GM12878 (cell line): ENCODE measurements at regions of chr14 and their contacts with region 1.

Region 1: GRCh38 chr14:59215325-59216181 is 27.1 kb downstream of the DAAM1 start:
- DNase-seq: no peak
- ATAC-seq: peak; percentile 19
- H3K4me3 ChIP-seq: 0 out of 2 replicates have a peak overlapping the region, but pooled peaks have one; percentile 11
- H3K27ac ChIP-seq: peak overlapping the region; percentile 59
- H3K4me1 ChIP-seq: peaks cover 15% of the 10 kb centered on the region
- H3K27me3 ChIP-seq: no peaks in the 10 kb centered on the region
- CTCF ChIP-seq: no peak
- EP300 ChIP-seq: no peak
- POLR2A ChIP-seq: no peak
- RAD21 ChIP-seq: no peak

Region 2: GRCh38 chr14:59199614-59200013 is 15.9 kb before region 1 on chr14:
- CTCF ChIA-PET with region 1: interaction called, 4 read pairs
- POLR2A ChIA-PET with region 1: interaction called, 5 read pairs
- RAD21 ChIA-PET with region 1: interaction called, 9 read pairs
- SMC1A ChIA-PET with region 1: interaction called, 17 read pairs
- in situ Hi-C with region 1: no loop called
- intact Hi-C with region 1: no loop called
- DNase-seq: no peak
- ATAC-seq: peak; percentile 27
- H3K4me3 ChIP-seq: no peak overlapping the region
- H3K27ac ChIP-seq: no peak overlapping the region
- H3K4me1 ChIP-seq: no peaks in the 10 kb centered on the region
- H3K27me3 ChIP-seq: no peaks in the 10 kb centered on the region
- CTCF ChIP-seq: no peak
- EP300 ChIP-seq: no peak
- POLR2A ChIP-seq: no peak
- RAD21 ChIP-seq: no peak